Activated naive CD4-positive, alpha-beta T cell treated with anti-CD3 and anti-CD28 coated beads, Interleukin-2, amount 10 ng/mL, durations not matched to agents 7 days and 5 days (primary cell): ENCODE measurements at regions of chr5 and their contacts with region 1.

Region 1: GRCh38 chr5:32232441-32233219 is 58.5 kb upstream of the GOLPH3 start:
- DNase-seq: peak; percentile 84
- H3K4me3 Mint-ChIP-seq: no peak overlapping the region
- H3K27ac Mint-ChIP-seq: no peak overlapping the region
- H3K4me1 Mint-ChIP-seq: no peaks in the 10 kb centered on the region
- H3K27me3 Mint-ChIP-seq: no peaks in the 10 kb centered on the region

Region 2: DNA sequence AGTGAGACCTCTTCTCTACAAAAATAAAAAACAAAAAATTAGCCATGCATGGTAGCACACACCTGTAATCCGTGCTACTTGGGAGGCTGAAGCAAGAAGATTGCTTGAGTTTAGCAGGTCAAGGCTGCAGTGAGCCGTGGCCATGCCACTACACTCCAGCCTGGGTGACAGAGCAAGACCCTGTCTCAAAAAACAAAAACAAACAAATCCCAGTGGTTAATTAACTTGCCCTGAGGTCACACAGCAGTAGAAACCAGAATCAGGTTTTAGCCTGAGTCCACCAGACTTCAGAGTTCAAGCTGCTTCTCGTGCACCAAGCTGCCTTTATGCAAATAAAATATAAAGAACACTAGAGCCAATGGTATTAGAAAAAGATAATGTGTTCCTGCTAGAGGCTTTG is 228.2 kb before region 1 on chr5:
- CTCF ChIA-PET with region 1: no interaction called
- DNase-seq: no peak
- H3K4me3 Mint-ChIP-seq: no peak overlapping the region
- H3K27ac Mint-ChIP-seq: no peak overlapping the region
- H3K4me1 Mint-ChIP-seq: no peaks in the 10 kb centered on the region
- H3K27me3 Mint-ChIP-seq: peaks cover 3% of the 10 kb centered on the region

Region 3: DNA sequence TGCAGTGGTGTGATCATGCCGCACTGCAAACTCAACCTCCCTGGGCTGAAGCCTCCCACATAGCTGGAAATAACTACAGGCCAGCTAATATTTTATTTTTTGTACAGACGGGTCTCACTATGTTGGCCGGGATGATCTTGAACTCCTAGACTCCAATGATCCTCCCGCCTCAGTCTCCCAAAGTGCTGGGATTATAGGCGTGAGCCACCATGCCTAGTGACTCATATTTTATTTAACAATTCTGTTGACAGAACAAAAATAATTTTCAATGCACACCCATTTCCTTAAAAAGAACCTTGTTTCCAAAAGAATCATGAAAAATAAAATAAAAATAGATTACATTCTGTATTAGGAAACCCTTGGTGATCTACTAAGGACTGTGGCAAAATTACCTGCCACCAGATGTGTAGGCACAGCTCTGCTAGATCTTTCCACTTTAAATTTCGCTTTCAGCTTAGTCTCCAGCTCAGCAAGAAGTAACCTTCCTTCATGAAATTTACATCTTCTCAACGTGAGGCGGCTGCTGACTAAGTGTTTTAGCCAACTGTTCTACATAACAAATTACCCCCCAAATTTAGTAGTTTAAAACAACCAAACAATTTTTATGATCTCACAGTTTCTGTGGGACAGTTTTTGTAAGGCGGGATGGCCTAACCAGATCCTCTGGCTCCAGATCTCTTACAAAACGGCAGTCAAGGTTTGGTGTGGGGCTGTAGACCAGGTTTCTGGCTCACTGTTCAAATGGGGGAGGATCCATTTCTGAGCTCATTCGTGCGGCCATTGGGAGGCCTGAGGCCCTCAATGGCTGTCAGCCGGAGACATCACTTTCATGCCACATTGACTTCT is 25.9 kb before region 1 on chr5:
- CTCF ChIA-PET with region 1: interaction called, 10 read pairs
- DNase-seq: no peak
- H3K4me3 Mint-ChIP-seq: no peak overlapping the region
- H3K27ac Mint-ChIP-seq: no peak overlapping the region
- H3K4me1 Mint-ChIP-seq: peaks cover 15% of the 10 kb centered on the region
- H3K27me3 Mint-ChIP-seq: peaks cover 9% of the 10 kb centered on the region

Region 4: DNA sequence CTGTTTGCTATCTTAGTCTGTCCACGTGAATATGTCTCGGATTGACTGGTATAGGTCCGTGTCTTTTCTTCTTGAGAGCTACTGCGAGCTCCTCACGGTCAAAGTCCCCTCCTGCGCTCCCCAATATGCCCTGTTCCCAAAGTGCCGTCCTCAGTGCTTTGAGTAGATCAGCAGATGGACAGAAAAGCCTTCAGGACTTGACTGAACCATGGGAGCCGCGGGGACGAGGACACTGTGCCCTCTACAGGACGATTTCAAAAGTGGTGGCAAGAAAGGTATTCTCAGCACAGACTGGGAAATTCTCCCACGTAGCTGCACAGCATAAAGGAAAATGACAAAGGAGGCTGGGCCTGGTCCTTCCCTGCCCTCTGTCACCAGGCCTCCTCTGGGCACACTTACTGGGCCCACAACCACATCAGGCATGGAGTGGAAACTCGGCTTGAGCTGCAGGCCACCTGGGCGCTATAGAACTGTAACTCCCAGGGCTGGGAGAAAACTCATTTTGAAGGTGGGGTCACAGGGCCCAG is 96.7 kb after region 1 on chr5:
- CTCF ChIA-PET with region 1: interaction called, 175 read pairs
- DNase-seq: peak; percentile 67
- H3K4me3 Mint-ChIP-seq: no peak overlapping the region
- H3K27ac Mint-ChIP-seq: no peak overlapping the region
- H3K4me1 Mint-ChIP-seq: no peaks in the 10 kb centered on the region
- H3K27me3 Mint-ChIP-seq: peaks cover 9% of the 10 kb centered on the region